Aorta (tissue), 5 donors: ENCODE measurements at regions of chr2 and their contacts with region 1.

Region 1: GRCh38 chr2:160493227-160494028 is at the start of gene RBMS1:
- DNase-seq: peak; percentile 69 to 87
- ATAC-seq: peak; percentile 73
- H3K4me3 ChIP-seq: peak within 1 kb of the TSS; percentile 44 to 75
- H3K27ac ChIP-seq: peak within 1 kb of the TSS; percentile 72 to 82
- H3K4me1 ChIP-seq: peaks cover 0 to 2% of the 10 kb centered on the region in 2 donors
- H3K27me3 ChIP-seq: no peaks in the 10 kb centered on the region
- total RNA-seq, gene RBMS1: 119 to 146 TPM

Region 2: GRCh38 chr2:160324161-160324800 is 169.1 kb before region 1 on chr2:
- intact Hi-C with region 1: loop called in 1 of 2 experiments (anchors 10 kb)
- DNase-seq: peak; percentile 56 to 81
- ATAC-seq: peak; percentile 68
- H3K4me3 ChIP-seq: no peak overlapping the region
- H3K27ac ChIP-seq: no peak overlapping the region
- H3K4me1 ChIP-seq: peaks cover 7 to 11% of the 10 kb centered on the region in 2 donors
- H3K27me3 ChIP-seq: no peaks in the 10 kb centered on the region

Region 3: DNA sequence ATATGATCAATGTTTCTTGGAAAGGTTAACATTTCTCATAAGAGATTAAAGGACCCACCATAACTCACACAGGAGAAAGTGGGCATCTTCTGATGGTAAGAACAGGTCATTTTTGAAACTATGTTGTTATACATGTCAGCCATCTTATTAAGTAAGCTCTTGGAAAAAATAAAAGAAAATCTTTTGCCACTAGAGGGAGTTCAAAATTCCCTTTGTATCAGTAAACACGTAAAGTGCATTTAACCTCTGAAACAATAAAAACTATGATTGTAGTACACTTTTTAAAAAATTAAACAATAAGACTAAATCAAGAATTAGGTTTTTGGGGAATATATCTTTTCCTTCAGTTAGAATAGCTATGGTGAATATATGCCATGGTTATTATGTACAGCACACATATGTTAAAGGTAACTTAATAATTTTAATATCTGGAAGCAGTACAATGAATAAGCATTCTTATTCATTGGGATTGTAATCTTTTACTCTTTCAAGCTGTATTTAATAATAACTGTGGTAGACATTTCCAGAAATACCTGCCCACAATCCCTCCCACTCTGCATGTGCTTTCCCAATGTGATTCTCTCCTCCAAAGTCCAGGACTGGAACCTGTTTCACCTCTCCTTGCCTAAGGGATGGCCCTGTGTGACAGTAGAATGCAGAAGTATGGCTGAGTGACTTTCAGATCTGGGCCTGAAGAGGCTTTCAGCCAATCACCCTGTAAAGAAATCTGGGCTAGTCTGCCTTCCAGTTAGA is 64.0 kb before region 1 on chr2:
- intact Hi-C with region 1: loop called (anchors 5 to 10 kb)
- DNase-seq: no peak
- ATAC-seq: no peak
- H3K4me3 ChIP-seq: no peak overlapping the region
- H3K27ac ChIP-seq: peak overlapping the region in 1 of 2 donors; percentile 44
- H3K4me1 ChIP-seq: peaks cover 3 to 5% of the 10 kb centered on the region in 2 donors
- H3K27me3 ChIP-seq: no peaks in the 10 kb centered on the region

Region 4: DNA sequence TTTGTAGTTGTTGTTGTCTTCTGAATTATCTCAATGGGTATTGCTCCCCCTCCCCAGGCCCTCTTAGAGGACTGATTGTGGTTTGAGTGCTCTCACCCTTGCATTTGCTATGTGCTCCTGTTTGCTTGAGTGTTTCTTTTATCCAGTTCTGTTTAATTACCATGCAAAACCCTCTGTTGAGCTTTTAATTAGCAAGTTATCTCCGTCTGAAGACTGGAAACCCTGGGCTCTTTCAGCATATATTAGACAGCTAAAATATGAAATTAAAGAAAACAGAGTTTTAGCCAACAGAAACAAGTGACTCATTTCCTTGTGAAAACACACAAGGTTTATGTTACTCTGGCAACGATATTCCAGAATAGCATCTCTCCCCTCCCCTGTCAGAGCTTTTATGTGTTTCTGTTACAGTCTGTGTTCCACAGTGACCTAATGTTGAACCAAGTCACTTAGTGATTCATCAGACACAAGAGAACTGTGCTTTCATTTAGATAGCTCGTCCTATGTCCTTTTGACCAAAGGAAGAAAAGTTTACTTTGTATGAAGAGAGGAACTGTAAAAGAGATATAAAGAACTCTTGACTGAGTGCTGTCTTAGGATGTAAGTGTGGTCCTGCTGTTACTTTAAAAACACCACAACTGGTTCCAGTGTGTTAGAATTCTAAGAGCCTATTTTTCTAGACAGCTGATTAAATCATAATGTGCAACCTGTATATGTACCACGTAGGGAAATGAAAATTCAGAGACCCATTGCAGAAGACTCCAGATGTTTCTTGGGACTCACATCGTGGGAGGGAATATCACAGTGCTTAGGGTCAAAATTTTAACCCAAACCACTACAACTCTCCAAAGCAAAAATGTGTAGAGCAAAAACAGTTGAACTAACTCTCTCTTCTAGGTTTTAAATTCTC is 173.0 kb after region 1 on chr2:
- intact Hi-C with region 1: loop called in 1 of 2 experiments (anchors 5 kb)
- DNase-seq: no peak
- ATAC-seq: peak; percentile 95
- H3K4me3 ChIP-seq: peak overlapping the region; percentile 8 to 18
- H3K27ac ChIP-seq: peak overlapping the region; percentile 74 to 82
- H3K4me1 ChIP-seq: peaks cover 0 to 1% of the 10 kb centered on the region in 2 donors
- H3K27me3 ChIP-seq: no peaks in the 10 kb centered on the region